B cell (primary cell): ENCODE measurements at regions of chr16 and their contacts with region 1.

Region 1: DNA sequence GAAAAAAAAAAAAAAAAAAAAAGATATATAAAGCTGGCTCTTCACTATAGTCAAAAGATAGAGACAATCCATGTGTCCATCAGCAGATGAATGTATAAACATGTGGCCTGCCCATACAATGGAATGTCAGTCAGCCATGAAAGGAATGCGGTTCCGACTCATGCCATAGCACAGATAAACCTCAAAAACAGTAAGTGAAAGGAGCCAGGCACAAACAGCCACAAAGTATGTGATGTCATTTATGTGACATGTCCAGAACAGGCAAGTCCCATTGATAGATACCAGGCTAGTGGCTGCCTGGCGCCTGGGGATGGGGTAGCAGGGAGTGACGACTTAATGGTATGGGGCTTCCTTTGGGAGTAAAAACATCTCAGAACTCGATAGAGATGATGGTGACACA is 155.7 kb downstream of the CMIP start:
- DNase-seq: no peak
- ATAC-seq: no peak
- H3K4me3 ChIP-seq: no peak overlapping the region
- H3K4me3 Mint-ChIP-seq: no peak overlapping the region
- H3K27ac ChIP-seq: no peak overlapping the region
- H3K27ac Mint-ChIP-seq: no peak overlapping the region
- H3K4me1 ChIP-seq: no peaks in the 10 kb centered on the region
- H3K4me1 Mint-ChIP-seq: peaks cover 17% of the 10 kb centered on the region
- H3K27me3 ChIP-seq: no peaks in the 10 kb centered on the region
- H3K27me3 Mint-ChIP-seq: no peaks in the 10 kb centered on the region
- CTCF ChIP-seq: no peak

Region 2: GRCh38 chr16:81394966-81395651 is 205.2 kb before region 1 on chr16:
- CTCF ChIA-PET with region 1: no interaction called
- POLR2A ChIA-PET with region 1: interaction called, 11 read pairs
- intact Hi-C with region 1: no loop called
- DNase-seq: no peak
- ATAC-seq: no peak
- H3K4me3 ChIP-seq: no peak overlapping the region
- H3K4me3 Mint-ChIP-seq: no peak overlapping the region
- H3K27ac ChIP-seq: no peak overlapping the region
- H3K27ac Mint-ChIP-seq: no peak overlapping the region
- H3K4me1 ChIP-seq: no peaks in the 10 kb centered on the region
- H3K4me1 Mint-ChIP-seq: no peaks in the 10 kb centered on the region
- H3K27me3 ChIP-seq: no peaks in the 10 kb centered on the region
- H3K27me3 Mint-ChIP-seq: no peaks in the 10 kb centered on the region
- CTCF ChIP-seq: no peak

Region 3: DNA sequence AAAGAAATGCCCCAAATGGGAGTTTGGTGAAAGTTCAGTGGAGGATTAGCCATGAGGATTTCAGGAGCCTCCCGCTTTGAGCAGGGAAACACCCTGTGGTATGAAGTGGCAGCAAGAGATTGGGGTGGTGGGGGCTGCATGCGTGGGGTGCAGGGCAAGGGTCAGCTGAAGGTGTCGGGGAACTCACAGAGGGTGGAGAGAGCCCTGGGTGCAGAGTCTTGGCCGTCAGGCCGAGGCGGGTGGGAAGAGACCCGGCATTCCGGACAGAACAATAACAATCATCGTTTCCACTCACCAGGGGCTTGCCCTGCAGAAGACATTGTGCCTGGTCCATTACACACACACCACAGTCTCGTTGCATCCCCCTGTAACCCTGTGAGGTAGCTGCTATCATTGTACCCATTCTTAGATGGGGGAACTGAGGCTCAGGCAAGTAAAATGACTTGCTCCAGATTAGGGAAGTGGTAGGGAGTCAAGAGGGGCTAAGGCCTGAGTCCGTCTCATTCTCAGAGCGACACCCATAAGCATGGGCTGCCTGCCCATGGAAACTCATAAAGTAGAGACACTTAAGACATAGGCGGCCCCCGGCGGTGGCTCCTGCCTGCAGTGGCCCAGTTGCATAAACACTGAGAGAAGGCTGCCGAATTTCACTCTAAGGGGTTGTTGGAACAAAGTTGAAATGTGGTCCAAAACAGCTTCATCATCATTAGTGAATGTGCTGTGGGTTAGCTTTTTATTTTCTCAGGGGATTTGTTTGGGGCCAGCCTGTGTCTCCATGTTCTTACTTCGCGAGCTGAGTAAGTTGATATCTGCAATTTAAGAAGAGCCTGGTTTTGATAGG is 62.3 kb before region 1 on chr16:
- CTCF ChIA-PET with region 1: no interaction called
- POLR2A ChIA-PET with region 1: no interaction called
- intact Hi-C with region 1: loop called (anchors 10 kb)
- DNase-seq: no peak
- ATAC-seq: no peak
- H3K4me3 ChIP-seq: no peak overlapping the region
- H3K4me3 Mint-ChIP-seq: no peak overlapping the region
- H3K27ac ChIP-seq: no peak overlapping the region
- H3K27ac Mint-ChIP-seq: no peak overlapping the region
- H3K4me1 ChIP-seq: peaks cover 0 to 3% of the 10 kb centered on the region in 2 donors
- H3K4me1 Mint-ChIP-seq: peaks cover 26% of the 10 kb centered on the region
- H3K27me3 ChIP-seq: no peaks in the 10 kb centered on the region
- H3K27me3 Mint-ChIP-seq: no peaks in the 10 kb centered on the region
- CTCF ChIP-seq: no peak

Region 4: GRCh38 chr16:81610144-81610842 is 10.0 kb after region 1 on chr16:
- CTCF ChIA-PET with region 1: no interaction called
- POLR2A ChIA-PET with region 1: no interaction called
- intact Hi-C with region 1: no loop called
- DNase-seq: no peak
- ATAC-seq: no peak
- H3K4me3 ChIP-seq: no peak overlapping the region
- H3K4me3 Mint-ChIP-seq: no peak overlapping the region
- H3K27ac ChIP-seq: no peak overlapping the region
- H3K27ac Mint-ChIP-seq: no peak overlapping the region
- H3K4me1 ChIP-seq: peaks cover 13 to 23% of the 10 kb centered on the region in 2 donors
- H3K4me1 Mint-ChIP-seq: peaks cover 35% of the 10 kb centered on the region
- H3K27me3 ChIP-seq: no peaks in the 10 kb centered on the region
- H3K27me3 Mint-ChIP-seq: no peaks in the 10 kb centered on the region
- CTCF ChIP-seq: no peak

Region 5: GRCh38 chr16:82031116-82032084 is 431.1 kb after region 1 on chr16:
- CTCF ChIA-PET with region 1: no interaction called
- POLR2A ChIA-PET with region 1: no interaction called
- intact Hi-C with region 1: no loop called
- DNase-seq: no peak
- ATAC-seq: no peak
- H3K4me3 ChIP-seq: no peak overlapping the region
- H3K4me3 Mint-ChIP-seq: no peak overlapping the region
- H3K27ac ChIP-seq: no peak overlapping the region
- H3K27ac Mint-ChIP-seq: no peak overlapping the region
- H3K4me1 ChIP-seq: no peaks in the 10 kb centered on the region
- H3K4me1 Mint-ChIP-seq: no peaks in the 10 kb centered on the region
- H3K27me3 ChIP-seq: peaks cover 0 to 2% (median 0%) of the 10 kb centered on the region in 4 experiments
- H3K27me3 Mint-ChIP-seq: peaks cover 25% of the 10 kb centered on the region
- CTCF ChIP-seq: no peak